ENCODE measurements at regions of chr9 and their contacts with region 1.

Region 1: GRCh38 chr9:105157130-105157583 is 87.3 kb upstream of the SLC44A1 start:
- DNase-seq: peak; percentile 46
- H3K4me3 Mint-ChIP-seq: no peak overlapping the region
- H3K27ac Mint-ChIP-seq: no peak overlapping the region
- H3K4me1 Mint-ChIP-seq: peaks cover 16% of the 10 kb centered on the region
- H3K27me3 Mint-ChIP-seq: no peaks in the 10 kb centered on the region

Region 2: GRCh38 chr9:104780799-104781395 is 376.3 kb before region 1 on chr9:
- CTCF ChIA-PET with region 1: interaction called, 4 read pairs
- intact Hi-C with region 1: loop called (anchors 1 kb)
- DNase-seq: no peak
- H3K4me3 Mint-ChIP-seq: no peak overlapping the region
- H3K27ac Mint-ChIP-seq: no peak overlapping the region
- H3K4me1 Mint-ChIP-seq: no peaks in the 10 kb centered on the region
- H3K27me3 Mint-ChIP-seq: no peaks in the 10 kb centered on the region

Region 3: DNA sequence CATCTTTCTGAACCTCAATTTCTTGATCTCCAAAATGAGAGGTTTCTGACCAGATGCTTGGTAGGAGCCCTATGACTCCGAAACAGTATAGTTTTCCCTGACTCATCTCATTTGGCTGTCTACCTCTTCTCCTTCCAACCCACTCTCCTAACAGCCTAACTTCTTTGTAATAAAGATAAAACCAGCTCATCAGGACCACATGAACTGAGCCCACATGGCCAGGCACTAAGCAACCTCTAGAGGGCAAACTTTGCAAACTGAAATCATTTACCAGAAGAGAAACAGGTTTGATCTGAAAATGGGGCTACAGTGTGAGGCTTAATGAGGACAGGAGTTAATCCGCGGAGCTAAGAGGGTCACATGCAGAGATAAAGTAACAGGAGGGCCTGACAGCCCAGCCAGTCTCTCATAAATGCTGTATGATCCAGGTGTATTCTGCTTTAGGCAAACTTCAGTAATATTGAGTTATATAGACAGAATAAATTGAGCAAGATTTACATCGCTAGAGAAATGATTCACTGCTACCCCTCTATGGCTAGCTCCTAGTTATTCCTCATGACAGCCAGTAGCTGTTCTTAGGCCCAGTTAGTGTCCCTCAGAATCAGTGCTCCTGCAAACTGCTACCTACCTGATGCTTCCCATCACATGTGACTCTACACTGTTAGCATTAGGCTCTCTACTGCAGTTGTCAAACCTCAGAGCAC is 293.8 kb before region 1 on chr9:
- CTCF ChIA-PET with region 1: interaction called, 55 read pairs
- intact Hi-C with region 1: loop called (anchors 1 kb)
- DNase-seq: peak; percentile 58
- H3K4me3 Mint-ChIP-seq: no peak overlapping the region
- H3K27ac Mint-ChIP-seq: no peak overlapping the region
- H3K4me1 Mint-ChIP-seq: peaks cover 17% of the 10 kb centered on the region
- H3K27me3 Mint-ChIP-seq: no peaks in the 10 kb centered on the region

Region 4: GRCh38 chr9:105127863-105128220 is 29.3 kb before region 1 on chr9:
- CTCF ChIA-PET with region 1: interaction called, 4 read pairs
- intact Hi-C with region 1: loop called (anchors 1 kb)
- DNase-seq: peak; percentile 74
- H3K4me3 Mint-ChIP-seq: no peak overlapping the region
- H3K27ac Mint-ChIP-seq: peak overlapping the region; percentile 28
- H3K4me1 Mint-ChIP-seq: peaks cover 44% of the 10 kb centered on the region
- H3K27me3 Mint-ChIP-seq: no peaks in the 10 kb centered on the region